ENCODE measurements at regions of chr15 and their contacts with region 1.

Region 1: DNA sequence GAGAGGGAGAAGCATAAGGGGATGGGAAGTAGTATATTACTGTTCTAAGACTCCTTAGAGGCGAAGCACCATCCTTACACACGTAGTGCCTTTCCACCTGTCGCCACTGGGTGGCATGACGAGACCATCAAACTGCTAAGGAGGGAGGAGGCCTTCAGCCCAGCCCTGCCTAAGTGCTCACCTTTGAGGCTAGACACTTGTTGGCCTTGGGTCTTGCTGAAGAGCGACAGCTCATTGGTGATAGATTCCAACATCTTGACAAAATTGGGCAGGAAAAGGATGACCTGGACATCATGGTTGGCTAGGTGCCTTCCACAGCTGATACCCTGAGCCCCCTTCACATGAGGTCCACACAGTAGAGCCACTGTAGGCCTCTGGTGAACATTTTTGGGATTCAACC is 19.6 kb downstream of the CLK3 start:
- DNase-seq: peak in 1 of 2 donors; percentile 44
- H3K4me3 ChIP-seq: no peak overlapping the region
- CTCF ChIP-seq: peak in 1 of 3 donors; percentile 92
- POLR2A ChIP-seq: no peak

Region 2: GRCh38 chr15:74373731-74374647 is 261.2 kb before region 1 on chr15:
- intact Hi-C with region 1: loop called (anchors 5 kb)
- DNase-seq: peak; percentile 91 to 99
- H3K4me3 ChIP-seq: peak overlapping the region; percentile 48
- CTCF ChIP-seq: no peak
- POLR2A ChIP-seq: no peak

Region 3: DNA sequence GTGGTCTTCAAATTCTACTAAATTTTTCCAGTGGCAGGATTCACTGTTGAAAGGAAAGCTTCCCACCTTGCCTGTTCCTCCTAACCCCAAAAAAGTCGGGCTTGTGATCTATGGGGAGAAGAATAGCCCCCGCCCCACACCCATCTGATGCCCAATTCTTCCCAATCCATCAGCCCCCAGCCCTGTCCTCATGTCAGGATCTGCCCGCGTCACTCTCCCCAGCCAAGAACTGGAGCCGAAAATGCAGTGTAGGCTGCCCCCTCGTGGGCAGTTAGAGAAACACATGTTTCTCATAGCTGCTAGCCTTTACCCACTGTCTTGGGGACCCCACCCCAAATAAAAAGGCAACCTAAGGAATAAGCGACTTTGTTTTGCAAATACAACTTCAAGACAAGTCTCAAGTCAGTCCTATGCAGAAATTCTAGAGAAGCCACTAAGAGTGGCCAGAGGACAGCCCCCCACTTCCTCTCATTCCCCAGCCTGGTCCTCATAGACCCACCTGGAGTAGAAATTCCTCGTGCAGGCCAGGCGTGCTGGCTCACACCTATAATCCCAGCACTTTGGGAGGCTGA is 133.6 kb after region 1 on chr15:
- intact Hi-C with region 1: loop called (anchors 5 kb)
- DNase-seq: peak; percentile 53 to 92
- H3K4me3 ChIP-seq: no peak overlapping the region
- CTCF ChIP-seq: peak in 1 of 3 donors; percentile 68
- POLR2A ChIP-seq: no peak

Region 4: DNA sequence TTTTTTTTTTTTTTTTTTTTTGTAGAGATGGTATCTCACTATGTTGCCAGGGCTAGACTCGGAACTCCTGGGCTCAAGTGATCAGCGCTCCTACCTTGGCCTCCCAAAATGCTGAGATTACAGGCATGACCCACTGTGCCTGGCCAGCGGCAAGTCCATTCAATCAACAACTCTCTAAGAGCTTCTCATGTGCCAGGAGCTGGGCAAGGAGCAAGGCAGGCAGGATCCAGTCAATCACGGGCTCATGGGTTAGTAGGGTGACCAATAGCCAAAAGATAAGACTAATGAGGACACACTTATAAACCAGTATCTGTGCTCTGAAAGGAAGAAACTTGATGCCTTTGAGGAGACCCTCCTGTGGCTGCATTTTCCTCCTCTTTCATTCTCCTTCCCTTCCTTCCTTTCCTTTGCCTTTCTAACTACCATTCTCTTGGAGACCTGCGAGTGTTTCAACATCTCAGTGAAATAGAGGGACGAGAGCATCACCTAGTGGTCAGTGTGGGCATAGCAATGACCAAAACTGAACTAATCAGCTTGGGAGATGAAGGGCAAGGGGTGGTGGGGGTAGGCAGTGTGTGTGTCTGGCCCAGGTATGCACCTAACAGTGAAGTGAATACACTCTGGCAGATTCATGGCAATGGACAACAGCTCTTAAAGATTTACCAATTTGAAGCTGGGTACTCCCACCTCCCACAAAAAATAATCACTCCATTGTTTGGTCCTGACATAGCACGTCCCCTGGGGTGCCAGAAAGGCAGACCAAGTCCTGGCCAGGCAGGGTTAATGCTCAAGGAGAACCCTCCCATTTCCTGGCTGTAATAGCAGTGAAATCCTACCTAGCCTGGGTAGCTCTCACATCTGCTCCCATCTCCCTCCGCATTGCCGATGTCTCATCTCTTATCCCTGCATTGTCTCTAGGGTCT is 315.1 kb after region 1 on chr15:
- intact Hi-C with region 1: loop called (anchors 5 kb)
- DNase-seq: peak; percentile 82 to 94
- H3K4me3 ChIP-seq: no peak overlapping the region
- CTCF ChIP-seq: peak in 2 of 3 donors; percentile 69 to 99
- POLR2A ChIP-seq: no peak